A549 (cell line): ENCODE measurements at regions of chr9 and their contacts with region 1.

Region 1: DNA sequence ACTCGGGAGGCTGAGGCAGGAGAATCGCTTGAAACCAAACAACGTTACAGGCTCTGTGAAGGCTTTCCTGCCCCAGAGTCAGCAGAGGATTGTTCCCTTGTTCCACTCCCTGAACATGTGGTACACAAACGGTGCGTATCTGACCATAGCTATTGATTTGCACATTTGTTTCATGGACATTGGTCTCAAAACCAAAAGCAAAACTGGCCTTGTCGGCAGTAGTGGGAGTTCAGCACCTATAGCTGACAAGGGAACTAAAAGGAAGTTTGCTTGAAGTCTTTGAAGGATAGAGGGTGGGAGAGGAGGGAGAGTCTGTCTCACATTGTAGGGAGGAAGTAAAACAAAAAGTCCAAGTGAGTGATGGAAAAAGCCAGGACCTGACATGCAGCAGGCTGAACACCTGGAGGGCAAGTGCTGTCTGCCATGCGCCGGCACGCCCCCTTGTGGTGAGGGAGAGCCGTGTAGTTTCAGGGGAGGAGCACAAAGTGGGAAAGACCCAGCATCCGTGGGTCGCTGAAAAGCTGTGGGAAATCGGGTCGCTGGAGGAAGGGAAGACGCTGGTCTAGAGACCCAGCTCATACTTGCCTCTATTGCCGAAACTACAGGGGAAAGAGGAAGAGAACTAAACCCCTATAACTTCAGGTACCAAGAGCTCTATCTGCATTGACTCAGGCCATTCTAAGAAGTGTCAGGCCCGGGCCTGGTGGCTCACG is 58.0 kb downstream of the RAD23B start:
- DNase-seq: peak; percentile 74 to 75
- ATAC-seq: peak; percentile 81 to 86
- H3K4me3 ChIP-seq: no peak overlapping the region
- H3K27ac ChIP-seq: no peak overlapping the region
- H3K4me1 ChIP-seq: no peaks in the 10 kb centered on the region
- CTCF ChIP-seq: peak; percentile 79
- EP300 ChIP-seq: no peak
- POLR2A ChIP-seq: no peak
- RAD21 ChIP-seq: peak; percentile 71 to 77

Region 2: DNA sequence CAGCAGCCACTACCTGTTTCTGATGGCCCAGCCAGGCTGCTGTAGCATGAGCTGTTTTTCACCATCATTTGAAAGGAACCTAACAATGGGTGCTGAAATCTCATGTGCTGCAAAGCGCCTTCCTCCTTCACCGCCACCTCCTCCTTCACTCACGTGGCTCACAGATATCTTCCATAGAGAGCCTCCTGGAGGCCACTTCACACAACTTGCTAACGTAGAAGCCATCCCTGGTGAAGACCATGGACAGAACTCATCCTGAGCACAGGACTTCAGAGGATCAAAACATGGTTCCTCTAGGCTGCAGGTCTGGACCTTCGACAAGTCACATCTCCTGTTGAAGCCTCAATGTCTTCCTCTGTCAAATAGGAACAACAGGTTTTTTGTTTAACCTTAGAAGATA is 213.5 kb before region 1 on chr9:
- CTCF ChIA-PET with region 1: no interaction called
- POLR2A ChIA-PET with region 1: no interaction called
- DNase-seq: peak in 1 of 2 experiments; percentile 27
- ATAC-seq: peak; percentile 70 to 77; a peak in 4 of 6 replicates
- H3K4me3 ChIP-seq: no peak overlapping the region
- H3K27ac ChIP-seq: no peak overlapping the region
- H3K4me1 ChIP-seq: no peaks in the 10 kb centered on the region
- CTCF ChIP-seq: no peak
- EP300 ChIP-seq: no peak
- POLR2A ChIP-seq: no peak
- RAD21 ChIP-seq: peak in 1 of 2 experiments; percentile 26; a peak in 2 of 5 replicates

Region 3: DNA sequence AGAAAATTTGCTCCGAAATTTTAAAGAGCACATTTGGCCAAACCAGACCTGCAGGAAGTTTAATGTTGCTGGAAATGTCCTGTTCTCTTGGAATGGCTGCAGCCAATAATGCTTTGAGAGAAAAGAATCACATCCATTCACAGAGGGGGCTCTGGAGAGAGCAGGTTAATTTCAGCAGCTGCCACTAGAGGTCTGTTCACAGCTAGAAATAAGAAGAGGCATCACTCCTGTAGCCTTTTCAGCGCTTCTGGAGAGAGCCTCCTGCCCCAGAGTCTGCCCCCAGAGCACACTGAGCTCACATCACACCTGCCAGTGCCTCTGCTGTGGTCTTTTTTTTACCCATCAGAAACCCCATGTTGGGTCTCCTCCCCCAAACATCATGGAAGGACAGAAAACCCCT is 182.8 kb before region 1 on chr9:
- CTCF ChIA-PET with region 1: interaction called, 29 read pairs
- POLR2A ChIA-PET with region 1: no interaction called
- DNase-seq: peak; percentile 31 to 40
- ATAC-seq: peak; percentile 92 to 97
- H3K4me3 ChIP-seq: no peak overlapping the region
- H3K27ac ChIP-seq: no peak overlapping the region
- H3K4me1 ChIP-seq: no peaks in the 10 kb centered on the region
- CTCF ChIP-seq: peak; percentile 32; the same call in 2 of the 3 replicates
- EP300 ChIP-seq: no peak
- POLR2A ChIP-seq: no peak
- RAD21 ChIP-seq: peak; percentile 42 to 58; a peak in 4 of 5 replicates

Region 4: GRCh38 chr9:107239474-107239873 is 101.6 kb before region 1 on chr9:
- CTCF ChIA-PET with region 1: interaction called, 16 read pairs
- POLR2A ChIA-PET with region 1: no interaction called
- DNase-seq: no peak
- ATAC-seq: no peak
- H3K4me3 ChIP-seq: no peak overlapping the region
- H3K27ac ChIP-seq: no peak overlapping the region
- H3K4me1 ChIP-seq: peaks cover 16% of the 10 kb centered on the region; the same call in 2 of the 3 replicates
- CTCF ChIP-seq: no peak; the same call in 2 of the 3 replicates
- EP300 ChIP-seq: no peak
- POLR2A ChIP-seq: no peak
- RAD21 ChIP-seq: peak; percentile 27 to 32; a peak in 3 of 5 replicates

Region 5: GRCh38 chr9:107292821-107293542 is 48.1 kb before region 1 on chr9:
- CTCF ChIA-PET with region 1: interaction called, 13 read pairs
- POLR2A ChIA-PET with region 1: no interaction called
- DNase-seq: no peak
- ATAC-seq: no peak
- H3K4me3 ChIP-seq: no peak overlapping the region
- H3K27ac ChIP-seq: no peak overlapping the region
- H3K4me1 ChIP-seq: peaks cover 31% of the 10 kb centered on the region; the same call in 2 of the 3 replicates
- CTCF ChIP-seq: no peak
- EP300 ChIP-seq: no peak
- POLR2A ChIP-seq: no peak
- RAD21 ChIP-seq: no peak

Region 6: DNA sequence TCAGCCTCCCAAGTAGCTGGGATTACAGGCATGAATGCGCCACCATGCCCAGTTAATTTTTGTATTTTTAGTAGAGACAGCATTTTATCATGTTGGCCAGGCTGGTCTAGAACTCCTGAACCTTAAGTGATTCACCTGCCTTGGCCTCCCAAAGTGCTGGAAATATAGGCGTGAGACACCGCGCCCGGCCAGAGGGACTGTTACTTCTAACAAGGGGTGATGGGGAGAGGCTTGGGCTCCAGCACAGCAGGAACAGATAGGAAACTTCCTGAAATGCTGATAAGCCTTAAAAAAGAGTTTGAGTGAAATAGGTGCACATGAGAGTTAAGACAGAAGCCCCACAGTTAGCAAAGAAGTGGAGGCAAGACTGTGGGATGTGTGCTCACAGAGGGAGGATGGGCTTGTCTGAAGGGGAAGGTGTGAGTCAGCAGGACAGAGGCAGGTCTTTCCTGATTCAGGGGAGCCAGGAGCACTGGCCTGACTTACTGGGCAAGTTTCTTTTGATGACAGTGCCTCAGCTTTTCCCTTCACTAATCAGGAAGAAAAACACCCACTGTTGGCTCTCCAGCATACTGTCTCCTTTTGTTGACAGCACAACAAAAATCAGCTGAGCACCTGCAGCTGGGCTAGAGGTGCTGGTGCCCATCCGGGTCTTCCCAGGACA is 10.4 kb after region 1 on chr9:
- CTCF ChIA-PET with region 1: interaction called, 26 read pairs
- POLR2A ChIA-PET with region 1: no interaction called
- DNase-seq: no peak
- ATAC-seq: peak; percentile 21 to 44; a peak in 3 of 6 replicates
- H3K4me3 ChIP-seq: no peak overlapping the region
- H3K27ac ChIP-seq: no peak overlapping the region
- H3K4me1 ChIP-seq: no peaks in the 10 kb centered on the region
- CTCF ChIP-seq: no peak
- EP300 ChIP-seq: no peak
- POLR2A ChIP-seq: no peak
- RAD21 ChIP-seq: no peak

Region 7: DNA sequence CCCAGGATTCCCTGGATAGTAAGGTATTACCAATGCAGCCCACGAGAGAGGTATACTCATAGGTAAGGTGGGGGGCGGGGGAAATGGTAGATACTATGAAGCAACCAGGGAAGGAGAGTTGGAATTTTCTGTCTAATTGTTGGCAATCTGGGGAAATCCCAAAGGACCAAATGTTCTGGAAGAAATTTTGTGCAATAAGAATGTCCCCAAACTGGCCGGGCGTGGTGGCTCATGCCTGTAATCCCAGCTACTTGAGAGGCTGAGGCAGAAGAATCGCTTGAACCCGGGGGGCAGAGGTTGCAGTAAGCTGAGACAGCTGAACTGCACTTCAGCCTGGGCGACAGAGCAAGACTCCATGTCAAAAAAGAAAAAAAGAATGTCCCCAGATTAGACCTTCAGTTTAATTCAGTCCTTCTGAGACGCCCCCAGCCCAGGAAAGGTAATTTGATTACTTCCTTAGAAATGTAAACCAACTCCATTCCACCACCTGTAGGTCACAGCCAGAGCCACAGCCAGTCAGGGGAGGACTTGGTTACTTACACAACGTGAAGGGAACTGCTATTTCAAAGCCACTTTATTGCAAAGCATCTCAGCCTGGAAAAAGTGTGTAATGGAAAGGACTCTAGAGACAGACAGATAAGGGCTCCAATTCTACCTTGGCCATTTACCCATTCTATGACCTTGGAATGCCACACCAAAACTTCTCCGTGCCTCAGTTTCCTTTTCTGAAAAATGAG is 198.5 kb after region 1 on chr9:
- CTCF ChIA-PET with region 1: no interaction called
- POLR2A ChIA-PET with region 1: no interaction called
- DNase-seq: no peak
- ATAC-seq: 0 out of 6 replicates have a peak, but pooled peaks of 1 of the 2 experiments have one; percentile 43
- H3K4me3 ChIP-seq: no peak overlapping the region
- H3K27ac ChIP-seq: peak overlapping the region in 1 of 2 experiments; percentile 55; a peak in 1 of 6 replicates
- H3K4me1 ChIP-seq: peaks cover under 1% of the 10 kb centered on the region; the same call in 2 of the 3 replicates
- CTCF ChIP-seq: no peak
- EP300 ChIP-seq: no peak
- POLR2A ChIP-seq: no peak
- RAD21 ChIP-seq: no peak